CD8-positive, alpha-beta T cell (primary cell): ENCODE measurements at regions of chr4 and their contacts with region 1.

Region 1: DNA sequence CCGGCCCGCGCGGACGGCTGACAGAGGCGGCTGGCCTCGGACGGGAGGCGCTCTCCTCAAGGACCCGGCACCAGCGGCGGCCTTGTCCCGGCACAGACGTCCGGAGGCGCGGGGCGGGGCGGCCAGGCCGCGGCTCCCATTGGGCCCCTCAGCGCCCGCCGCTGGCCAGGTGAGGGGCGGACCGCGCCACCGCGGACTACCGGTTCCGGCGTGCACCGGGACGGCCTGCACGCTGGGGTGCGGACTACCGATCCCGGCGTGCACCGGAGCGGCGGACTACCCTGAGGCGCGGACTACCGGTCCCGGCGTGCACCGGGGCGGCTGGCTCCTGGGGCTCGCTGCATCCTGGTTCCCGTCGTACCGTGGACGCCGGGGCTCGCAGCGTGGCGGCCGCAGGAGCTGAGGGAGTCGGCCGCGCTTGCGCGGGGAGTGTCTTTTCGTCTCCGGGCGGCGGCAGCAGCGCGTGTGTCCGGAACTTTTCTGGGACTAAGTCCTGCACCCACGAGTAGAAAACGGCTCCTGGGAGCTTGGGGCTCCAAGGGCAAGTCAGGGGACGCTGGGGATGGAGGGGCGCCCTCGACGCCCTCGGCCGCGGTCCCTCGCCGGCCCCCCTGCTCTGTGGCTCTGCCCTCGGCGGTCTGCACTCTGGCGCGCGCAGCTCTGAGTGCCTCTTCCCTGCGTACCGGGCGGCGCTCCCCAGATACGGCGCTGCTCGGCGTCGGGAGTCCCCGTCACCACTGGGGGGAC is at the start of gene LETM1:
- DNase-seq: peak; percentile 73 to 96 (median 92)
- ATAC-seq: peak; percentile 96
- H3K4me3 ChIP-seq: peak within 1 kb of the TSS; percentile 83 to 91
- H3K4me3 Mint-ChIP-seq: peak within 1 kb of the TSS; percentile 80
- H3K27ac ChIP-seq: peak within 1 kb of the TSS; percentile 47 to 50
- H3K27ac Mint-ChIP-seq: peak within 1 kb of the TSS; percentile 45
- H3K4me1 ChIP-seq: peaks cover 19% of the 10 kb centered on the region
- H3K4me1 Mint-ChIP-seq: peaks cover 44% of the 10 kb centered on the region
- H3K27me3 ChIP-seq: no peaks in the 10 kb centered on the region
- H3K27me3 Mint-ChIP-seq: no peaks in the 10 kb centered on the region
- CTCF ChIP-seq: no peak
- total RNA-seq, gene LETM1: 22.7 to 25.9 TPM

Region 2: GRCh38 chr4:1683736-1684505 is 172.3 kb before region 1 on chr4 and contains the start of gene FAM53A:
- CTCF ChIA-PET with region 1: no interaction called
- POLR2A ChIA-PET with region 1: no interaction called
- intact Hi-C with region 1: loop called in 1 of 2 experiments (anchors 1 kb)
- DNase-seq: peak in 7 of 9 experiments; percentile 7 to 95 (median 43)
- ATAC-seq: peak; percentile 94
- H3K4me3 ChIP-seq: peak within 1 kb of the TSS; percentile 42 to 43
- H3K4me3 Mint-ChIP-seq: peak within 1 kb of the TSS; percentile 89
- H3K27ac ChIP-seq: peak within 1 kb of the TSS in 1 of 2 experiments; percentile 4
- H3K27ac Mint-ChIP-seq: peak within 1 kb of the TSS; percentile 81
- H3K4me1 ChIP-seq: no peaks in the 10 kb centered on the region
- H3K4me1 Mint-ChIP-seq: peaks cover 12% of the 10 kb centered on the region
- H3K27me3 ChIP-seq: no peaks in the 10 kb centered on the region
- H3K27me3 Mint-ChIP-seq: no peaks in the 10 kb centered on the region
- CTCF ChIP-seq: no peak
- total RNA-seq, gene FAM53A: 1.8 to 1.9 TPM

Region 3: GRCh38 chr4:1721004-1721665 is 135.1 kb before region 1 on chr4 and contains the starts of genes TACC3 and TMEM129:
- CTCF ChIA-PET with region 1: no interaction called
- POLR2A ChIA-PET with region 1: interaction called, 3 read pairs
- intact Hi-C with region 1: loop called (anchors 2 kb)
- DNase-seq: peak; percentile 89 to 98 (median 94)
- ATAC-seq: peak; percentile 82
- H3K4me3 ChIP-seq: peak within 1 kb of the TSS; percentile 54 to 74
- H3K4me3 Mint-ChIP-seq: peak within 1 kb of the TSS; percentile 86
- H3K27ac ChIP-seq: peak within 1 kb of the TSS; percentile 85 to 86
- H3K27ac Mint-ChIP-seq: peak within 1 kb of the TSS; percentile 100
- H3K4me1 ChIP-seq: peaks cover 56% of the 10 kb centered on the region
- H3K4me1 Mint-ChIP-seq: peaks cover 49% of the 10 kb centered on the region
- H3K27me3 ChIP-seq: no peaks in the 10 kb centered on the region
- H3K27me3 Mint-ChIP-seq: no peaks in the 10 kb centered on the region
- CTCF ChIP-seq: no peak
- total RNA-seq, gene TACC3: 131 to 137 TPM
- total RNA-seq, gene TMEM129: 14.5 to 14.8 TPM

Region 4: DNA sequence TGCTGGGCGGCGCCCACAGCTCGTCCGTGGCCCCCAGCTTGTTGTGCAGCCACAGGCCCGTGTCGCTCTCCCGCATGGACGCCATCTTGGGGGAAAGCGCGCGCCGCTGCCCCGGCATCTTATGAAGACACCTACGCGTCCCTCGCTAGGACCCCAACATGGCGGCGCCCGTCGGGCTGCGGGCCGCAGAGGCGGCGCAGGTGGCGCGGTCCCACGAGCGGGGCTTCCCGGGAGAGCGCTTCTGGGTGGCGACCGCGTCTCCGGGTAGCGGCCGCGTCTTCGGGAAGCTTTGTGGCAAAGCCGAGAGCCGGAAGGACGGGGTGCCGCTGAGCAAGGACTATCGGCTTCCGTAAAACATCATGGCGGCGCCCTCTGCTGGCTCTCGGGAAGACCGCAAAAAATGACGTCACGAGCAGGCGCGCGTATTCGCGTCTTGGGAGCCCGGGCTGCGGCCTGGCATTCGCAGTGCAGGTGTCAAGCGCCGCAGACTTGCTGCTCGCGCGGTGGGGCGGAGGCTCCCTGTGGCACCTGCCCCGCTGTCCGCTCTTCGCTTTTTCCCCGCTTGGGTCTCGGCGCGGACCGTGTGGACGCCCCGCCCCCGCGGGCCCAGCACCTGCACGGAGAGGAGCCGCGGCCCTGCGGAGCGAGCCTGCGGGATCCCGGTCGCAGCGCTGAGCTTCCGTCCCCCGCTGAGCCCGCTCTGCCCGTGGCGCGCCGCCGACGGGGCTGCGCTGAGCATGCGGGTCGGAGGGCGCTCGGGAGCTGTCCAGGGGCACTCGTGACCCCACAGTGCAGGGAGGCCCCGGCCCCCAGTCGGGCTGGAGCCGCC is 152.9 kb after region 1 on chr4 and contains the start of gene NELFA:
- CTCF ChIA-PET with region 1: no interaction called
- POLR2A ChIA-PET with region 1: no interaction called
- intact Hi-C with region 1: loop called (anchors 1 to 5 kb)
- DNase-seq: peak; percentile 86 to 98 (median 96)
- ATAC-seq: peak; percentile 83
- H3K4me3 ChIP-seq: peak within 1 kb of the TSS; percentile 96 to 100
- H3K4me3 Mint-ChIP-seq: peak within 1 kb of the TSS; percentile 92
- H3K27ac ChIP-seq: peak within 1 kb of the TSS; percentile 98 to 99
- H3K27ac Mint-ChIP-seq: peak within 1 kb of the TSS; percentile 96
- H3K4me1 ChIP-seq: peaks cover 18% of the 10 kb centered on the region
- H3K4me1 Mint-ChIP-seq: peaks cover 32% of the 10 kb centered on the region
- H3K27me3 ChIP-seq: no peaks in the 10 kb centered on the region
- H3K27me3 Mint-ChIP-seq: no peaks in the 10 kb centered on the region
- CTCF ChIP-seq: no peak
- total RNA-seq, gene NELFA: 39.0 to 45.8 TPM